ENCODE measurements at regions of chr2 and their contacts with region 1.

Region 1: DNA sequence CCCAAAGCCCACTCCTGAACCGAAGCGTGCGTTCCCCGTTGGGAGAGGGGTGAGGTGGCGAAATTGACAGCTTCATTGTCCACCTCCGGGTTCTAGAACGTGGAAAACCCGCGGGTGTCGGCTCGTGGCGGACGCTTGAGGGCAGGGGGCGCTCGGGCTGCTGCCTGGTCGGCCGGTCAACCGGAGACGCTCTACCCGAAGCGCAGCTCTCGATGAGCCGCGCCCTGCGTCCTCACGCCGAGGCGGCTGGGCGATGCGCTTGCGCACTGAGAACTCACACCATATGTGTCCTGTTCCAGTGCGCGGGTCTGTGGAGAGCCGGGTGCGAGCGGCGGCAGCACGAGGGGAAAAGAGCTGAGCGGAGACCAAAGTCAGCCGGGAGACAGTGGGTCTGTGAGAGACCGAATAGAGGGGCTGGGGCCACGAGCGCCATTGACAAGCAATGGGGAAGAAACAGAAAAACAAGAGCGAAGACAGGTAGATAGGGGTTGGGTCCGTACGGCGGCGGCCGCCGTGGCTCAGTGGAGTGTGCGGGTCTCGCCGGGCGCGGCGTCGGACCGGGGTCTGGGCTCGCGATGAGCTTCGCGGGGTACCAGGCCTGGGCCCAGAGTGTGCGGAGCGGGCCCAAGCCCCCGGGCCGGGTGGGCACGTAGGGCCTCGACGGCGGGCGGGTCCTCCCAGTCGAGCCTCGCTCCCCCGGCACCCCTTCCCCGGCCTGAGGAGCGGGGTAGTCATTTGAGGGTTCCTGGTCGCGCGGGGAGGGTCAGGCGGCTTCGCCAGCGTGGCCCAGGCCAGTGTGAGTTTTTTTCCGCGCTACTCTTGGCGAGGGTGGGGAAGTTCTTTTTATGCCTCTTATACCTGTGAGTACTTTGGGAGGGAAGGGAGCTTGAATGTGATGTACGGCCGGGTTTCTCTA is at the start of gene EIF5B:
- DNase-seq: peak; percentile 85 to 97 (median 93)
- ATAC-seq: peak; percentile 62
- H3K4me3 ChIP-seq: peak within 1 kb of the TSS; percentile 76 to 79
- H3K4me3 Mint-ChIP-seq: no peak within 1 kb of the TSS
- H3K27ac ChIP-seq: peak within 1 kb of the TSS; percentile 76 to 89
- H3K27ac Mint-ChIP-seq: no peak within 1 kb of the TSS
- H3K4me1 ChIP-seq: peaks cover 30% of the 10 kb centered on the region
- H3K4me1 Mint-ChIP-seq: peaks cover 42% of the 10 kb centered on the region
- H3K27me3 ChIP-seq: no peaks in the 10 kb centered on the region
- H3K27me3 Mint-ChIP-seq: no peaks in the 10 kb centered on the region
- CTCF ChIP-seq: no peak
- total RNA-seq, gene EIF5B: 29.2 to 30.4 TPM

Region 2: DNA sequence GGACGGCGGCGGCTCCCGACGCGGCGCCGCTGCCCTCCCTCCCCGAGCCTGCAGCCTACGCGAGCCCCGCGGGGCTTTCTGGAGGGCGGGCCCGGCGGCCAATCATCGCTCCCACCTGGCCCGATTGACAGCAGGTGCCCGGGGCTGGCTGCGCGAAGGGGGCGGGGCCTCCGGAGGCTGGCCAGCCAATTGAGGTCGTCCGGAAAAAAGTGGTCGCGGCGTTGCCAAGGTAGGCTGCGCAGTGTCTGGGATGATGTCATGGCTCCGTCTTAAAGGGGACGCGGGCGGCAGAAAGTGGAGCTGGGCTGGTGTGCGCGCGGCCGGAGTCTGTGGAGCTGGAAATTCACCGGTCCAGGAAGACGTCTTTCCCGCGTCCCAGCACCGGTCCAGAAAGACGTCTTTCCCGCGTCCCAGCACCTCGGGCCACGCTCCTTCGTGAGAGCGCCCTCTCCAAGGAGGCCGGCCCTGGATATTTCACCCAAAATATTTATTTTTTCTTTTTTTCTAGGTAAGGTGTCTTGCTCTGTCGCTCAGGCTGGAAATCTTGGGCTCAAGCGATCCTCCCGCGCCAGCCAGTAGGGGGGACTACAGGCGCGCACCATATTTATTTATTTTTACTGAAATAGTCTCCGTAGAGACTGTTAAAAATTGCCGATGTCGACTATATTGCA is 1673.3 kb before region 1 on chr2 and contains the start of gene ACTR1B:
- CTCF ChIA-PET with region 1: no interaction called
- POLR2A ChIA-PET with region 1: no interaction called
- intact Hi-C with region 1: loop called in 1 of 2 experiments (anchors 5 kb)
- DNase-seq: peak; percentile 94 to 100 (median 97)
- ATAC-seq: peak; percentile 86
- H3K4me3 ChIP-seq: peak within 1 kb of the TSS; percentile 86 to 93
- H3K4me3 Mint-ChIP-seq: peak within 1 kb of the TSS; percentile 93
- H3K27ac ChIP-seq: peak within 1 kb of the TSS; percentile 94 to 97
- H3K27ac Mint-ChIP-seq: peak within 1 kb of the TSS; percentile 97
- H3K4me1 ChIP-seq: peaks cover 30% of the 10 kb centered on the region
- H3K4me1 Mint-ChIP-seq: peaks cover 28% of the 10 kb centered on the region
- H3K27me3 ChIP-seq: no peaks in the 10 kb centered on the region
- H3K27me3 Mint-ChIP-seq: no peaks in the 10 kb centered on the region
- CTCF ChIP-seq: no peak
- total RNA-seq, gene ACTR1B: 81.9 to 82.1 TPM

Region 3: DNA sequence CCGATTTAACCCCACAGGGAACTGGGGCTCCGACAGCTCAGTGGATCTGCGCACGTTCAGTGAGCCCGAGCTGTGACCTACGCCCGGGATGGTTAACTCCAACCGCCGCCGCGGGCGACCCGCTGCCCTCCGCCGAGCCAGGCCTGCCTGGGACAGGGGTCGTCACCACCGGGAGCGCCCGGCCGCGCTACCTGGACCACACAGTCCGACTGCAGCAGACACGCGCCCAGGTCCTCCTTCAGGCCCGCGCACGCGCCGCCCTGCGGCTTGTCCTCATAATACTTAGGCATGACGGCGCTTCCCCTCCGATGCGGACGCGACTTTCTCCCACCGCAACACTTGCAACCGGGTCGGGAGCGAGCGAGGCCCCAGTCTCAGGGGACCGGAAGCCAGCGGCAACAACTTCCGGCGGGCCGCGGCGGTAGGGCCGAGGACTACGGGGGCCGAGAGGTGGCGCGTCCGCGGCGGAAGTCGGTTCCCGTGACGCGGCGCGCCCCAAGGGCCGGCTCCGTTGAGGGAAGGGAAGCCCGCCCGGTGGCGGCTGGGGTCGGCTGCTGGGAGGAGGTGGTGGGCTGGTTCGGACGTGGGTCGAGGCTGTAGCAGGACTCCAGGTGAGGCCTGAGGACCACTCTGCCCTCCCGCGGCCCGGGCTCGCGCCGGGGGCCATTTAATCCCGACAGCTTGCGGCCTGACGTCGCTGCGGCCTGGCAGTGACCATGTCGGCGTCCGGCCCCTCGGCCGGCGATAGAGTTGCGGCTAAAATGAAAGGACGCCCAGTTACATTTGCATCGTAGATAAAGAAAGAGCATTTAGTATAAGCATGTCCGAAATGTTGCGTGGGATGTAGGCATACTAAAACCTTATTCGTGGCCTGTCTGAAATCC is 729.0 kb before region 1 on chr2 and contains the starts of genes COA5 and UNC50:
- CTCF ChIA-PET with region 1: no interaction called
- POLR2A ChIA-PET with region 1: no interaction called
- intact Hi-C with region 1: loop called (anchors 2 to 5 kb)
- DNase-seq: peak; percentile 84 to 95 (median 89)
- ATAC-seq: peak; percentile 81
- H3K4me3 ChIP-seq: peak within 1 kb of the TSS; percentile 84 to 94
- H3K4me3 Mint-ChIP-seq: peak within 1 kb of the TSS; percentile 89
- H3K27ac ChIP-seq: peak within 1 kb of the TSS; percentile 87 to 95
- H3K27ac Mint-ChIP-seq: peak within 1 kb of the TSS; percentile 95
- H3K4me1 ChIP-seq: peaks cover 48% of the 10 kb centered on the region
- H3K4me1 Mint-ChIP-seq: peaks cover 74% of the 10 kb centered on the region
- H3K27me3 ChIP-seq: no peaks in the 10 kb centered on the region
- H3K27me3 Mint-ChIP-seq: no peaks in the 10 kb centered on the region
- CTCF ChIP-seq: no peak
- total RNA-seq, gene COA5: 19.7 to 24.1 TPM
- total RNA-seq, gene UNC50: 12.5 to 14.4 TPM

Region 4: DNA sequence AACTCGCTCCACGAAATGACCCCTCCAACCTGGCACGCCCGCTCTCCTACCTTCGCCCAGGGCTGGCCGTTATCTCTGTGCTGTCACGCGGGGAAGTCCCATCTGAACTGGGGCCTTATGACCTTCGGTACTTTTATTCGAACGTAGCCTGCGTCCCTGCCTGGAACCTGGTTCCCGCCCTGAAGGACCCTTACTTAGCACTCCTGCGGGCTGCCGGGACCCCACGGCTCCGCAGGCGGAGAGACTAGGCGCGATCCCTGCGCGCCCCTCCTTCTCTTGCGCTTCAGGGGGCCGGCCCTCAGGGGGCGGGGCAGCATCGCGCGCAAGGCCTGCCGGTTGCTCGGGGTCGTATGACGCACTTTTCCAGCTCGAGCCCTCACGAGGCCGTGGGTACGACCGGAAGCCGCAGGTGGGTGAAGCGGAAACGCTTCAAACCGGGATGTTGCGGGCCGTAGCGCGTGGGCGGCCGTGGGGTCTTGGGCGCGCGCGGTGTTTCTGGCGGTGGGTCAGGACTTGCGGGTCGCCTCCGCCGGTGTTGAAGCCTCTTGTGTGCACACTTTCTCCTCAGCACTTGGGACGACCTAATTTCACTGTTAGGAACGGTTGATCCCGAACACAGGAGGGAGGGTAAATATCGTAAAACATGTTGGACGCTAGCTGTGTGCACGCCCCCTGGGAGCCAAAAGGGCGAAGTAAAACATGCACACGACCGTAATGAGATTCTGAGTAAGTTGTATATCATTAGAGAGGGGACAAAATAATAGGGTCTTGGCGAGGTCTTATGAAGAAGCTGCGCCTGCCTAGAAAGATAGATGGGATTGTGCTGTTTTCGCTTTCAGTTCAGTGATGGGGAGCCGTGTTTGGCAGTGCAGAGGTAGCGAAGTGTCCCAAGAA is 182.5 kb before region 1 on chr2 and contains the starts of genes LIPT1 and TSGA10:
- CTCF ChIA-PET with region 1: no interaction called
- POLR2A ChIA-PET with region 1: interaction called, 3 read pairs
- intact Hi-C with region 1: loop called (anchors 1 kb)
- DNase-seq: peak; percentile 81 to 98 (median 93)
- ATAC-seq: peak; percentile 94
- H3K4me3 ChIP-seq: peak within 1 kb of the TSS; percentile 80 to 92
- H3K4me3 Mint-ChIP-seq: peak within 1 kb of the TSS; percentile 84
- H3K27ac ChIP-seq: peak within 1 kb of the TSS; percentile 95 to 96
- H3K27ac Mint-ChIP-seq: no peak within 1 kb of the TSS
- H3K4me1 ChIP-seq: peaks cover 28% of the 10 kb centered on the region
- H3K4me1 Mint-ChIP-seq: peaks cover 31% of the 10 kb centered on the region
- H3K27me3 ChIP-seq: no peaks in the 10 kb centered on the region
- H3K27me3 Mint-ChIP-seq: no peaks in the 10 kb centered on the region
- CTCF ChIP-seq: no peak
- total RNA-seq, gene LIPT1: 9.7 to 11.0 TPM
- total RNA-seq, gene TSGA10: 14.4 to 14.9 TPM

Region 5: DNA sequence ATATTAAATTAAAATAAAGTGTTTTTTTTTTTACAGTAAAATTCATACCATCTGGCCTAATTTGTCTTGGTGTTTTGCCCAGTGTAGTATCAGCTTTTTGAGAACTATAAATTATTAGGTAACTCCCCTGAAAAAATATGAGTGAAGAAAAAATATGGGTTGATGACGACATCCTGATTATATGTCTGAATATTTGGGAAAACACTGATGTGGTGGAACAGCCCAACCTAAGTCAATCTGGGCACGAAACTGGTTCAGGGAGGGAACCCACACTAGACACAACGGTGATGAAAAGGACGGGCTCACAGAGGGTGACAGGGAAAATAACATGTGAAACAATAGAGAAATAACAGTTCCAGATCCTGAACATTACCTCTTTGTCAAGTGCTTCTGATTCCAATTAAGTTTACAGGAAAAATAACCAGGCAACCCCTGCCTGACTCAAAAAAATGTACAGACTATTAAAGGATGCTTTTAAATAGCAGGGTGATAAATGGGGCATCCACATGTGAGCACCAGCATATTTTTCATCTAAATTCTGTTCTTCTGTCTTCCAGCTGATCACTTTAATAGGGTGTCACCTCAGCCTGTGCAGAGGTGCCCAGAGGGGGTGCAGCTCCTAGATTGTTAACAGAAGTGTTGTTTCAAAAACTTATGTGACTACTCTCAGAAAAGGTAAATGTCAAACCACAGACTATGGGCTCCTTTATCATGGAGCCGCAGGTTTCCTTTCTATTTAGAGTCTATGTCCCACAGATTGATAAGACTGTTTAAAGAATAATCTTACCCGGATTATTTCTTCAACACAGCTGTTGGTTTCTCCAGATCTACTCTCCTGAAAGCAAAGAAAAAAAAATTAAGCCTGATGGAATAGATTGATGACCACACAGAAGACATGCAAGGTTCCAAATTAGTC is 499.6 kb after region 1 on chr2:
- CTCF ChIA-PET with region 1: no interaction called
- POLR2A ChIA-PET with region 1: no interaction called
- intact Hi-C with region 1: no loop called
- DNase-seq: no peak
- ATAC-seq: no peak
- H3K4me3 ChIP-seq: no peak overlapping the region
- H3K4me3 Mint-ChIP-seq: no peak overlapping the region
- H3K27ac ChIP-seq: no peak overlapping the region
- H3K27ac Mint-ChIP-seq: no peak overlapping the region
- H3K4me1 ChIP-seq: no peaks in the 10 kb centered on the region
- H3K4me1 Mint-ChIP-seq: peaks cover 1% of the 10 kb centered on the region
- H3K27me3 ChIP-seq: no peaks in the 10 kb centered on the region
- H3K27me3 Mint-ChIP-seq: no peaks in the 10 kb centered on the region
- CTCF ChIP-seq: no peak

Region 6: DNA sequence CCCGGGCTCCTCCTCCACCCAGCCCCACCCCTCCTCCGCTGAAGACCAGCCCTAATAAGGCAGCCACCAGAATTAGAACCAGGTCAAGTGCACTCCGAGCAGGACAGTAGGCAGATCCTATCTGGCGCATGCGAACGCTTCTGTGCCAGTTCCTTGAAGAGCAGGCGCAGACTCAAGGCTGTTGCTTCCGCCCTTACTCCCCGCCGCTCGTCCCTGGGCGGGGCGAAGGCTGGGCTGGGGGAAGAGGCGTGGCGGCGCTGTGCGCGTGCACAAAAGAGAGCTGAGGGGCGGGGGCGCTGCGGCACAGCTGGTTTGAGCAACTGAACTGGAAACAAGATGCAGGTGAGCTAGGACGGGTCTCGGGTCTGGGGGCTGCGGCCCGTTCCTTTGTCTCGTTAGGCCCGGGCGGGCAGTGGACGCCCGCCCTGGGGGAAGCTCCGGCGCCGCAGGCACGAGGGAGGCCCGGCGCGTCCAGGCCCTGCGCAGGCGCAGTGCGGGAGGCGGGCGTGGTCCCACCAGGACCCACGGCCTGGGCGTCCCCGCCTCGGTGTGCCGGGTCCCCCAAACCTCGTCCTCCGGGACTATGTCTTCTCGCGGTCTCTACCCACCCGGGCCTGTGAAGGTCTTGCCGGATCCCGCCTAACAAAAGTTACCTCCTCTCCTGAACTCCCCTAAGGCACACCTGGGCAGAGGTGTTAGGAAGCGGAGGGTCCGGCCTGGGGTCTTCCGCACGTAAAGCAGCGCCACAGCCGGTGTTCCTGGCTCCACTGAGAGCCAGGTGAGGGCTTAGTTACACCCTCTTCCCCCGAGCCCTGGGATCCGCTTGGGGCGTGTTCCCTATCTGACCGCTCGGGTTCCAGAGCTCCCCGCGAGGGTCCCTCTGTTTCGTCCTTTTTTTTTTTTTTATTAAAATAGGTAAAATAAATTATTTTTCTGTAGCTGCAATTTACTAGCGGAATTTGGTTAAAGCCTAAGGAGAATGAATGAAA is 1225.7 kb after region 1 on chr2 and contains the start of gene PDCL3:
- CTCF ChIA-PET with region 1: no interaction called
- POLR2A ChIA-PET with region 1: no interaction called
- intact Hi-C with region 1: loop called in 1 of 2 experiments (anchors 2 kb)
- DNase-seq: peak; percentile 88 to 98 (median 94)
- ATAC-seq: peak; percentile 88
- H3K4me3 ChIP-seq: peak within 1 kb of the TSS; percentile 69 to 89
- H3K4me3 Mint-ChIP-seq: peak within 1 kb of the TSS; percentile 97
- H3K27ac ChIP-seq: peak within 1 kb of the TSS; percentile 84 to 87
- H3K27ac Mint-ChIP-seq: peak within 1 kb of the TSS; percentile 99
- H3K4me1 ChIP-seq: peaks cover 18% of the 10 kb centered on the region
- H3K4me1 Mint-ChIP-seq: peaks cover 39% of the 10 kb centered on the region
- H3K27me3 ChIP-seq: no peaks in the 10 kb centered on the region
- H3K27me3 Mint-ChIP-seq: no peaks in the 10 kb centered on the region
- CTCF ChIP-seq: no peak
- total RNA-seq, gene PDCL3: 32.4 to 33.5 TPM

Region 7: GRCh38 chr2:101001691-101002561 is 1664.6 kb after region 1 on chr2 and contains the start of gene RPL31:
- CTCF ChIA-PET with region 1: no interaction called
- POLR2A ChIA-PET with region 1: no interaction called
- intact Hi-C with region 1: loop called (anchors 10 kb)
- DNase-seq: peak; percentile 90 to 98 (median 95)
- ATAC-seq: peak; percentile 97
- H3K4me3 ChIP-seq: peak within 1 kb of the TSS; percentile 92 to 95
- H3K4me3 Mint-ChIP-seq: peak within 1 kb of the TSS; percentile 95
- H3K27ac ChIP-seq: peak within 1 kb of the TSS; percentile 81 to 90
- H3K27ac Mint-ChIP-seq: peak within 1 kb of the TSS; percentile 98
- H3K4me1 ChIP-seq: peaks cover 27% of the 10 kb centered on the region
- H3K4me1 Mint-ChIP-seq: peaks cover 51% of the 10 kb centered on the region
- H3K27me3 ChIP-seq: no peaks in the 10 kb centered on the region
- H3K27me3 Mint-ChIP-seq: no peaks in the 10 kb centered on the region
- CTCF ChIP-seq: no peak
- total RNA-seq, gene RPL31: 2,776 to 2,895 TPM